ENCODE measurements at regions of chr19 and their contacts with region 1.

Region 1: DNA sequence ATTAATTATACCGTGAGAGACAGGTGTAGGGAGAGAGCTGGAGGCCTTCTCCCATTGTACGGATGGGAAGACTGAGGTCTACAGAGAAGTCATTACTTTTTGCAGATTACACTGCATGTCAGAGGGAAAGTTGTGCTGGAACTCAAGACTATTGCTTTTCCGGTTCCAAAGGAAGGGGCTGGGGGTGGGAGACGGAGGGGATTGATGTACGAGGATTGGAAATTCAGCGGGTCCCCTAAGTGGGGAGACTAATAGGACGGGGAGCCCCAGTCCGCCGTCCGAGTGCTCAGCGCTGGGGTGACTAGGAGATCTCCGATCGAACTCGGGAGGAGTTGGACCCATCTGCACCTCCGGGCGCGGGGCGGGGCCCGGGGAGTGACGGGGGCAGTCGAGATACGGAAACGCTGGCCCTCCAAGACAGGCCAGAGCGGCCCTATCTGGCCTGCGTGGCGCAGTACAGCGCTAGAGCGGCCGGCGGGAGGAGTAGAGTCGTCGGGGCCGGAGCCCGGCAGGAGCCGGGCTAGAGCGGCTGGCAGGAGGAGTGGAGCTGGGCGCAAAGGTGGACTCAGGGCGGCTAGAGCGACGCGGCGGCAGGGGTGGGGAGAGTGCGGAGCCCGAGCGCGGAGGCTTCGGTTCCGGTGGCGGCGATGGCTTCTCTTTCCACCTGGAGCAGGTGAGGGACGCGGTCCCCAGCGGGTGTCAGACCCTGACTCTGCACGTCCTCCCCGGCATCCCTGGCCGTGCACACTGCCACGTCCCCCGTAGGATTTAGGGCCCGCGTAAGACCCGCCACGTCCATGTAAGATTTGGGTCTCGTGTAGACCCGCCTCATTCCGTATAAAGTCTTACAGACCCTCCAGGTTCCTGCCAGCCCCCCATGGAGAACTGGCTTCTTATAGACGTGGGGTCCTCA is 1.1 kb downstream of the ARHGEF1 start:
- DNase-seq: peak; percentile 91
- H3K4me3 Mint-ChIP-seq: peak overlapping the region; percentile 90
- H3K27ac Mint-ChIP-seq: peak overlapping the region; percentile 92
- H3K4me1 Mint-ChIP-seq: peaks cover 54% of the 10 kb centered on the region
- H3K27me3 Mint-ChIP-seq: no peaks in the 10 kb centered on the region

Region 2: GRCh38 chr19:41554907-41555306 is 329.2 kb before region 1 on chr19:
- CTCF ChIA-PET with region 1: no interaction called
- intact Hi-C with region 1: loop called (anchors 10 kb)
- DNase-seq: peak; percentile 60
- H3K4me3 Mint-ChIP-seq: peak overlapping the region; percentile 37
- H3K27ac Mint-ChIP-seq: peak overlapping the region; percentile 100
- H3K4me1 Mint-ChIP-seq: peaks cover 66% of the 10 kb centered on the region
- H3K27me3 Mint-ChIP-seq: no peaks in the 10 kb centered on the region

Region 3: DNA sequence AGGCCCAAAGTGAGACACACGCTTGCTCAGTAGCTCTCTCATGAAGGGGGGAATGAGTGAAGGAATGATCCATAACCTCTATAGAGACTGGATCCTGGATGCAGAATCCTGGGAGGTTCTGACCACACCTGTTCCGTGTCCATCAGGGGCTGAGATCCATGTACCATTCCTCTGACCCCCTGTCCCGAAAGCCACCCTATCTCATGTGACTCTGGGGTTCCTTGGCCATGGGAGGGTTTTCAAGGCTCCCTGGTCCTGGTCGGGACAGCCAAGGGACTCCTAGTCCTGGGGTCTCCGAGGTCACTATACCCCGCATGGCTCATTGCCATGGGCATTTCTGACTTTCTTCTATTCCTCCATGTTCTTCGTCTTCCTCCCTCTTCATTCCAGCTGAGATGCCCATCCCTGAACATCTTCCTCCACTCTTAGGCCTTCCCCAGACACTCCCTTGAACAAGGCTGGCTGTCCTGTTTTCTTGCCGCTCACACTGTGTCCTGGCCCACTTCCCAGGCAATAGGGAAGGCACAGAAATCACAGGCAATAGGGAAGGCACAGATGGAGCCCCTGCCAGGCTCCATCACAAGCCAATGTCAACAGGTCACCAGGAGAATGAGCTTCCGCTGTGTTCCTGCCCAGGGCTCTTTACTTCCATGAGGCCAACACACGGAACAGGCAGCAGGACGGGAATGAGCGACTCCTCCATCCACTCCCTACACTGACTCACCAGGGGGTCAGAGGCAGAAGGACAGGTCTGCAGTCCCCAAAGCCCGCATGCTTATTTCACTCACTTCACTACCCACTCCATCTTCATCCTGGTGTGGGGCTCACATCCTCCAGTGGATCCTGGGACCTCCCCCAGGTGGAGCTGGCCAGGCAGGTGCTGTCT is 172.5 kb before region 1 on chr19:
- CTCF ChIA-PET with region 1: no interaction called
- intact Hi-C with region 1: no loop called
- DNase-seq: no peak
- H3K4me3 Mint-ChIP-seq: no peak overlapping the region
- H3K27ac Mint-ChIP-seq: no peak overlapping the region
- H3K4me1 Mint-ChIP-seq: peaks cover 2% of the 10 kb centered on the region
- H3K27me3 Mint-ChIP-seq: peaks cover 20% of the 10 kb centered on the region

Region 4: GRCh38 chr19:41767115-41767514 is 117.0 kb before region 1 on chr19:
- CTCF ChIA-PET with region 1: no interaction called
- intact Hi-C with region 1: no loop called
- DNase-seq: no peak
- H3K4me3 Mint-ChIP-seq: no peak overlapping the region
- H3K27ac Mint-ChIP-seq: no peak overlapping the region
- H3K4me1 Mint-ChIP-seq: peaks cover under 1% of the 10 kb centered on the region
- H3K27me3 Mint-ChIP-seq: peaks cover 23% of the 10 kb centered on the region

Region 5: GRCh38 chr19:41821003-41821735 is 62.9 kb before region 1 on chr19:
- CTCF ChIA-PET with region 1: no interaction called
- intact Hi-C with region 1: no loop called
- DNase-seq: peak; percentile 72
- H3K4me3 Mint-ChIP-seq: no peak overlapping the region
- H3K27ac Mint-ChIP-seq: no peak overlapping the region
- H3K4me1 Mint-ChIP-seq: no peaks in the 10 kb centered on the region
- H3K27me3 Mint-ChIP-seq: peaks cover 5% of the 10 kb centered on the region

Region 6: GRCh38 chr19:41928221-41928683 is 44.2 kb after region 1 on chr19 and contains the start of gene ERFL:
- CTCF ChIA-PET with region 1: interaction called, 3 read pairs
- intact Hi-C with region 1: loop called (anchors 1 kb)
- DNase-seq: peak; percentile 40
- H3K4me3 Mint-ChIP-seq: peak within 1 kb of the TSS; percentile 77
- H3K27ac Mint-ChIP-seq: peak within 1 kb of the TSS; percentile 40
- H3K4me1 Mint-ChIP-seq: peaks cover 21% of the 10 kb centered on the region
- H3K27me3 Mint-ChIP-seq: no peaks in the 10 kb centered on the region
- total RNA-seq, gene ERFL: 0.99 to 1.3 TPM

Region 7: GRCh38 chr19:41934849-41935374 is 50.8 kb after region 1 on chr19:
- CTCF ChIA-PET with region 1: interaction called, 6 read pairs
- intact Hi-C with region 1: loop called (anchors 1 kb)
- DNase-seq: peak; percentile 94
- H3K4me3 Mint-ChIP-seq: no peak overlapping the region
- H3K27ac Mint-ChIP-seq: peak overlapping the region; percentile 44
- H3K4me1 Mint-ChIP-seq: peaks cover 39% of the 10 kb centered on the region
- H3K27me3 Mint-ChIP-seq: no peaks in the 10 kb centered on the region

Region 8: GRCh38 chr19:41945135-41945766 is 61.2 kb after region 1 on chr19:
- CTCF ChIA-PET with region 1: interaction called, 17 read pairs
- intact Hi-C with region 1: loop called (anchors 1 kb)
- DNase-seq: peak; percentile 98
- H3K4me3 Mint-ChIP-seq: peak overlapping the region; percentile 48
- H3K27ac Mint-ChIP-seq: peak overlapping the region; percentile 93
- H3K4me1 Mint-ChIP-seq: peaks cover 42% of the 10 kb centered on the region
- H3K27me3 Mint-ChIP-seq: no peaks in the 10 kb centered on the region